ENCODE measurements at regions of chr2 and their contacts with region 1.

Region 1: GRCh38 chr2:234898654-234899053 is 53.2 kb upstream of the SH3BP4 start:
- H3K4me3 Mint-ChIP-seq: no peak overlapping the region
- H3K27ac Mint-ChIP-seq: no peak overlapping the region
- H3K4me1 Mint-ChIP-seq: no peaks in the 10 kb centered on the region
- H3K27me3 Mint-ChIP-seq: no peaks in the 10 kb centered on the region

Region 2: GRCh38 chr2:234836256-234836655 is 62.4 kb before region 1 on chr2:
- intact Hi-C with region 1: loop called (anchors 2 kb)
- H3K4me3 Mint-ChIP-seq: no peak overlapping the region
- H3K27ac Mint-ChIP-seq: no peak overlapping the region
- H3K4me1 Mint-ChIP-seq: no peaks in the 10 kb centered on the region
- H3K27me3 Mint-ChIP-seq: no peaks in the 10 kb centered on the region

Region 3: DNA sequence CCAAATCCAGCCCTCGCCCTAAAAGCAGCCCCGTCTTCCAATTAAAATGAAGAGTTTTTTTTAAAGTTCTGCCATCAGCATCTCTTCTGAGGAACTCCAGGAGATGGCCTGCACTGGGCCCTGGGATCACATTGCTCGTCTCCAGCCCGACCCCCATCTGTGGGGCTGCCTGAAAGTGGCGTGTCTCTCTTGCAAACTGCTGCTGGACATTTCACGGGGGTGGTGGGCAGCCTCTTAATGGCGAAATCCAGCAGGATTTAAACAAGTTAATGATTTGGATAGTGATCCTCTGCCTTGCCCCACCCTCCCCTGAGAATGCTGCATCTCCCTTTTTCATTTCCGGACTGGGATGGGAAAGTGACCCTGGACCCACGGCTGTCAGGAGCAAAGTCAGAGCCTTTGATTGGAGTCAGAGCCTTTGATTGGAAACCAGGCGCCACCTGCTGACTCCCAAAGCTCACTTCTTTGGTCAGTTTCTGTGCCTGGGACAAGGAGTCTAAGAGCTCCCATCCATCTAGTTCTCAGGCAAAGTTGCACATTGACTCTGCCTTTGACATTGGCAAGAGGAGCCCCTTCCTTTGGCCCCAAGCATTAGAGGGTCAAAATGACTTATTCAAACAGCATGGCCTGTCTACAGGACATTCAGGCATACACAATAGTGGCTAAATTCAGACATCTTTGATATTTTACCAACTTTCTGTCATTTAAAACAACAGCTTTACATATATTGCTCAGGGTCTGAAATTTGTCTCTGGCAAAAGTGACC is 208.4 kb after region 1 on chr2:
- intact Hi-C with region 1: no loop called
- H3K4me3 Mint-ChIP-seq: no peak overlapping the region
- H3K27ac Mint-ChIP-seq: no peak overlapping the region
- H3K4me1 Mint-ChIP-seq: no peaks in the 10 kb centered on the region
- H3K27me3 Mint-ChIP-seq: no peaks in the 10 kb centered on the region

Measured in dendritic cell treated with granulocyte-macrophage colony-stimulating factor and Interleukin-4, amounts not matched to agents 40 ng/mL and 50 ng/mL, for 4 days (primary cell).